GM10248 (cell line): ENCODE measurements at regions of chr1 and their contacts with region 1.

Region 1: GRCh38 chr1:69982992-69983391 is 222.4 kb downstream of the LRRC40 start:
- DNase-seq: no peak
- CTCF ChIP-seq: no peak

Region 2: DNA sequence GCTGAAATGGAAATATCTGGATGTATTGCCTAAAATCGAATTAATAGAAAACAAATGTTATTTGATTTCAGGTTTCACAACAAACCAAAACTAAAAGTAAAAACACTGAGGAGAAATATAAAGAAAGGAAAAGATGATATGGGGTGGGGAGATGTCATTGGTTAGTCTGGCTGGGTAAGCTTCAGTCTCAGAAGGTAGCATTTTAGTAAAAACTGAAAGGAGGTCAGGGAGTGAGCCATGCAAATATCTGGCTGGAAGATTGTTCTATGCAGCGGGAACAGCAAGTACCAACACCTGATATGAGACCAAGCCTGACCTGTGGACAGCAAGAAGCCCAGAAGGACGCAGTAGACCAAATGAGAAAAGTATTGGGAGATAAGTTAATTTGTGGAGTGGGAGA is 42.2 kb before region 1 on chr1:
- CTCF ChIA-PET with region 1: no interaction called
- POLR2A ChIA-PET with region 1: no interaction called
- DNase-seq: no peak
- CTCF ChIP-seq: no peak

Region 3: DNA sequence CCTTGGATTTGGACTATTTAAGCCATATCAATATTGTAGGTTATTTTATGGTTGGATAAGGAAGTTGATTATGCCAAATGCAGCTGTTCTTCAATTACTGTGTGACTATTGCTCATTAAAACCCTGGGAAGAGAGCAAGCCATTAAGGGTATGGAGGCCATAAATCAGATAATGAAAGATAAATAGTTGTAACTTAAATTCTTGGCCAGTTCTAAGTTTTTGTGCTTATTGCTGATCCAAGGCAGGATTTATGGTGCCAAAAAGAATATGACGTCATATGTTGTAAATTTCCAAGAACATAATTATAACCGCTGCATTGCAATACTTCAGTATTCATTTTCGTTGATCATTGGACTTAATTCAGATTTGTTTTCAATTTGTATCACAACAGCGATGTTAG is 10.8 kb after region 1 on chr1:
- CTCF ChIA-PET with region 1: interaction called, 10 read pairs
- POLR2A ChIA-PET with region 1: no interaction called
- DNase-seq: no peak
- CTCF ChIP-seq: no peak

Region 4: DNA sequence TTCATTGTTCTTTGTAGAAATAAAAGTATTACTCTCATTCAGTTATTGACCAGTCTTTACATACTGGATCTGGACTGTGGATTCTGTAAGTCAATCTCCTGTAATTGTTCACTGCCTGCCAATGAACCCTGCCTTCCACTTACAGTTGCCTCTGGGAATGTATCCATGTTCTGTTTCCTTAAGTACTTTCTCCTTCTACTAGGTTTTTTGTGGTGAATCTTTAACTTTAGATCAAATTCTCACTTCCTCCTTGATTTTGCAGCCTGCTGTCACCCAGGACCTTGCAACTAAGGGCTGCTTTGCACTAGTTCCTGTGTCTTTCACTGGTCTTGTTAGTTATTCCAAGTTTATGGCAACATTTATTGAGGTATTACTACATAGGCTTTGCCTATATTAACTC is 399.7 kb after region 1 on chr1:
- CTCF ChIA-PET with region 1: no interaction called
- POLR2A ChIA-PET with region 1: no interaction called
- DNase-seq: peak; percentile 27
- CTCF ChIP-seq: no peak